K562 (cell line): ENCODE measurements at regions of chr1 and their contacts with region 1.

Region 1: GRCh38 chr1:25695090-25695770 is 78.6 kb downstream of the MAN1C1 start:
- DNase-seq: peak; percentile 37 to 66 (median 48)
- ATAC-seq: peak; percentile 88
- H3K4me3 ChIP-seq: no peak overlapping the region
- H3K27ac ChIP-seq: no peak overlapping the region
- H3K4me1 ChIP-seq: peaks cover 4 to 7% of the 10 kb centered on the region in 2 experiments; a peak in 4 of 5 replicates
- H3K27me3 ChIP-seq: peaks cover 31 to 88% of the 10 kb centered on the region in 2 experiments
- CTCF ChIP-seq: peak; percentile 28 to 53 (median 51); a peak in 5 of 6 replicates
- EP300 ChIP-seq: peak; percentile 10; the same call in 1 of the 2 replicates
- POLR2A ChIP-seq: no peak
- RAD21 ChIP-seq: peak; percentile 54 to 72

Region 2: DNA sequence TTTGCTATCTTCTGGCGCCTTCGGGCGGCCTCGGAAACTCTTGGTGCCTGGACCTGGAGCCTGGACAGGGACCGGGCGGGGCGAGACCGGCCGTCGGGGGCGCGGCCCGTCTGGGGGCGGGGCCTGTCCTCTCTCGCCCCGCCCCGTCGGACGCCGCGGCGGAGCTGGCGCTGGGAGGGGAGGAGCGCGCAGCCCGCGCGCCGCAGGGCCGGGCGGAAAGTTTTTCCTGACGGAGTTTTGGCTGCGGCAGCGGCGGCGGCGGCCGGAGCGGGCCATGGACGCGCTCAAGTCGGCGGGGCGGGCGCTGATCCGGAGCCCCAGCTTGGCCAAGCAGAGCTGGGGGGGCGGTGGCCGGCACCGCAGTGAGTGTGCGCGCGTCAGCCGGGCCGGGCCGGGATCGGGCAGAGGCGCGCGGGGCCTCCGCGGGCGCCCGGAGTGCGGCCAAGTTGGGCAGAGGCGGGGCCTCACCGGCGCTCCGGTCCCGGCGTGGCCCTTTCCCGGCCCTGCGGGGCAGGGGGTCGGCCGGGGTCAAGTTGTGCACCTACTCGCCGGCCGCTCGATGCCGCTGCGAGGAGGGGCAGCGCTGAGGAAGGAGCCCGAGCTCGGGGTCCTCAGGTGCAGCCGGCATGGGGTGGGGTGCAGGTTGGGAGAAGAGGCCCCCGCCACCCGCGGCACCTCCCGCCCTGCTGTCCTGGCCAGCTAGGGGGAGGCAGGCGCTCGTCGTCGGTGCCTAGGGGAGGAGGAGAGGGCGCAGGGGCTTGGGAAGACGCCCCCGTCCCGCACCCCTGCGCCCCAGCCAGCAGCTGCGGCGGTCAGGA is 151.6 kb before region 1 on chr1 and contains the start of gene LDLRAP1:
- CTCF ChIA-PET with region 1: no interaction called
- POLR2A ChIA-PET with region 1: interaction called, 3 read pairs
- in situ Hi-C with region 1: no loop called
- intact Hi-C with region 1: loop called (anchors 10 kb)
- DNase-seq: peak; percentile 88 to 99 (median 98)
- ATAC-seq: peak; percentile 97
- H3K4me3 ChIP-seq: peak within 1 kb of the TSS; percentile 82
- H3K27ac ChIP-seq: peak within 1 kb of the TSS; percentile 78
- H3K4me1 ChIP-seq: peaks cover 34 to 36% of the 10 kb centered on the region in 2 experiments
- H3K27me3 ChIP-seq: no peaks in the 10 kb centered on the region
- CTCF ChIP-seq: peak in 2 of 3 experiments; percentile 14 to 21; a peak in 1 of 6 replicates
- EP300 ChIP-seq: no peak
- POLR2A ChIP-seq: no peak
- RAD21 ChIP-seq: no peak
- polyA plus RNA-seq, gene LDLRAP1: 0.56 to 1.4 TPM